ENCODE measurements at regions of chr11 and their contacts with region 1.

Region 1: GRCh38 chr11:34480314-34480713 is 33.3 kb downstream of the ELF5 start:
- DNase-seq: no peak
- H3K4me3 ChIP-seq: no peak overlapping the region
- H3K27ac ChIP-seq: no peak overlapping the region
- H3K4me1 ChIP-seq: no peaks in the 10 kb centered on the region
- H3K27me3 ChIP-seq: no peaks in the 10 kb centered on the region
- CTCF ChIP-seq: no peak
- EP300 ChIP-seq: no peak
- POLR2A ChIP-seq: no peak

Region 2: DNA sequence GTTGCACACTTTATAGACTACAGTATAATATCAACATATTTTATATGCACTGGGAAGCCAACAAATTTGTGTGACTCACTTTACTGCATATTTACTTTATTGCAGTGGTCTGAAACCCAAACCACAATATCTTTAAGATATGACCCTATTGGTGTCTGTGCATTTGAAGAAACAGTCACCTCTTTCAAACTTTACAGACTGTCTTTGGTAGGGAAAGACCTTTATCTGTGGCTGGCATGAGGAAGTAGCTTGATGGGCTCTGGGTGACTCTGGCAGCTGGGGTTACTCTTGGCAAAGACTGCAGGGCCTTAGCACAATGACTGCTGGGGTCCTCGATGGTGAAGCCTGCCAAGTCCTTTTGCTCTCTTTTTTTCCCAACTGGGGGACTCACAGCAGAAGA is 101.2 kb before region 1 on chr11:
- intact Hi-C with region 1: loop called (anchors 10 kb)
- DNase-seq: no peak
- H3K4me3 ChIP-seq: no peak overlapping the region
- H3K27ac ChIP-seq: no peak overlapping the region
- H3K4me1 ChIP-seq: no peaks in the 10 kb centered on the region
- H3K27me3 ChIP-seq: no peaks in the 10 kb centered on the region
- CTCF ChIP-seq: no peak
- EP300 ChIP-seq: no peak
- POLR2A ChIP-seq: no peak

Region 3: DNA sequence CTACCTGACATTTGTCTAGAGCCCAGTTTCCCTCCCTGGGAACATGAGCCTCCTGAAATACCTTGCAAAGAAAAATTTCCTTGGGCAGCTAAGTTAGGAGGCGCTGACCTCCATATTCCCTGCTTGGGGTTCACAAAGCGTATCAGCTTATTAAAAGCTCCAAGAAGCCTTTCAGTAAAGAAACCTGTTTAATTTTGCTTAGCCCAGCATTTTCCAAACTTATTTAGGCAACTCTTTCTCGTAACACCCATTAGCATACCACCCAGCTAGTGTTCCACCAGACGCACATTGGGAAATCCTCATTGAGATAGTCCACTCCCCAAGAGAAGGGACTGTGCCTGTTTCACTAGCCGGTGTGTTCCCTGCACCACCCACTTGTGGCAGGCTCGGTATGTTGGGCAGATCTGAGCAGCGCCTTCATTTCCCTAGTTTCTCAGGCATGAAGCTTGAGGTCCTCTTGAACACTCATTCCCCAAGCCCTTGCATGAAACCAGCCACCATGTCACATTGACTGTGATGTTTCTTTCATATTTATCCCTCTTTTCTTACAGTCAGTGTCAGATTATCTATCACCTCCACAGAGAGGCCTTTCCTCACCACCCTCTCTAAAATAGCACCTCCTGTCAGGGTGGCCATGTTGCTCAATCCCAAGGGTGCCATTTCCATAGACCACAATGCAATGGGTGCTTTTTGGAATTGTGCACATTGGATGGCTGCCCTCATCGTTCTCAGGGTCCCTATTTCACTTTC is 45.7 kb after region 1 on chr11:
- intact Hi-C with region 1: no loop called
- DNase-seq: no peak
- H3K4me3 ChIP-seq: no peak overlapping the region
- H3K27ac ChIP-seq: no peak overlapping the region
- H3K4me1 ChIP-seq: no peaks in the 10 kb centered on the region
- H3K27me3 ChIP-seq: peaks cover 0 to 10% (median 0%) of the 10 kb centered on the region in 3 donors
- CTCF ChIP-seq: no peak
- EP300 ChIP-seq: no peak
- POLR2A ChIP-seq: no peak

Region 4: GRCh38 chr11:34552270-34552669 is 72.0 kb after region 1 on chr11:
- intact Hi-C with region 1: no loop called
- DNase-seq: peak in 1 of 2 donors; percentile 28
- H3K4me3 ChIP-seq: no peak overlapping the region
- H3K27ac ChIP-seq: no peak overlapping the region
- H3K4me1 ChIP-seq: no peaks in the 10 kb centered on the region
- H3K27me3 ChIP-seq: peaks cover 0 to 7% (median 0%) of the 10 kb centered on the region in 3 donors
- CTCF ChIP-seq: no peak
- EP300 ChIP-seq: no peak
- POLR2A ChIP-seq: no peak

Measured in stomach (tissue), 19 donors.